Activated CD8-positive, alpha-beta T cell treated with anti-CD3 and anti-CD28 coated beads for 36 hours (primary cell): ENCODE measurements at regions of chr4 and their contacts with region 1.

Region 1: GRCh38 chr4:37452952-37453280 is 208.4 kb downstream of the NWD2 start:
- DNase-seq: peak; percentile 76
- ATAC-seq: peak; percentile 69
- H3K4me3 Mint-ChIP-seq: peak overlapping the region; percentile 59
- H3K27ac Mint-ChIP-seq: no peak overlapping the region
- H3K4me1 Mint-ChIP-seq: peaks cover 15% of the 10 kb centered on the region
- H3K27me3 Mint-ChIP-seq: peaks cover 42% of the 10 kb centered on the region
- CTCF ChIP-seq: peak; percentile 57

Region 2: DNA sequence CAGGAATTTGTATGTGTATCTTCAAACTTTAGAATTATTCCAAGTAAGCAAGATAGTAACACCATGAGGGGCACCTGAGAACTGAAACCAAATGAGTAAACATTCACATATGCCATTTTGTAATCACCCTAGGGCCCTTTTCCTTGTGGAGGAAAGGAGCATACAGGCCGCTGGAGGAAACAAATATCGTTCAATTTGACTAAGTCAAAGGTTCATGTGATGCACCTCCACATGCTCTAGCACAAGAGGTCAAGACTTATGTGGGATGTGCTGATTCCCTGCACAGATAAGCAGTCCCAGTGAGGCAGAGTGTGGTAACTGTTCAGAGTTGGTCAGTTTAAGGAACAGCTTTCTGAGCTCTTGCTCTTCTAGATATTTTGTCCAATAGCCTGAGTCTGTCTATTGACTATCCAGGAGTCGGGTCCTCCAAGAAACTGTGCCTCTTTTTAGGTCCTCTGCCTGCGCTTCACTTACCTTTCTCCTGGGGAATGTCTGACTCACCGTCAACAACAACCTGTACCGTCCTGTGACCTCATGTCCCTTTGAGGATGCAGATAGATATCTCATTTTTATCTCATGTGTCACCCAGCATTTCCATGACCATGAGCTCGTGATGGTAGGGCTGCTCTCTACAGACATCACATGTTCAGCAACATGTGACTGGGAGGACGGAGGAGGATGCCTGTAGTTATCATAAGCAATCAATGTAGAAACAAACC is 11.5 kb before region 1 on chr4:
- CTCF ChIA-PET with region 1: interaction called, 47 read pairs
- POLR2A ChIA-PET with region 1: no interaction called
- intact Hi-C with region 1: no loop called
- DNase-seq: no peak
- ATAC-seq: no peak
- H3K4me3 Mint-ChIP-seq: no peak overlapping the region
- H3K27ac Mint-ChIP-seq: no peak overlapping the region
- H3K4me1 Mint-ChIP-seq: no peaks in the 10 kb centered on the region
- H3K27me3 Mint-ChIP-seq: peaks cover 19% of the 10 kb centered on the region
- CTCF ChIP-seq: no peak

Region 3: GRCh38 chr4:37561803-37562207 is 108.9 kb after region 1 on chr4:
- CTCF ChIA-PET with region 1: interaction called, 44 read pairs
- POLR2A ChIA-PET with region 1: interaction called, 4 read pairs
- intact Hi-C with region 1: loop called (anchors 1 kb)
- DNase-seq: no peak
- ATAC-seq: no peak
- H3K4me3 Mint-ChIP-seq: no peak overlapping the region
- H3K27ac Mint-ChIP-seq: no peak overlapping the region
- H3K4me1 Mint-ChIP-seq: no peaks in the 10 kb centered on the region
- H3K27me3 Mint-ChIP-seq: no peaks in the 10 kb centered on the region
- CTCF ChIP-seq: no peak

Region 4: GRCh38 chr4:37567841-37568240 is 114.9 kb after region 1 on chr4:
- CTCF ChIA-PET with region 1: interaction called, 44 read pairs
- POLR2A ChIA-PET with region 1: interaction called, 4 read pairs
- intact Hi-C with region 1: loop called (anchors 1 kb)
- DNase-seq: no peak
- ATAC-seq: no peak
- H3K4me3 Mint-ChIP-seq: no peak overlapping the region
- H3K27ac Mint-ChIP-seq: no peak overlapping the region
- H3K4me1 Mint-ChIP-seq: no peaks in the 10 kb centered on the region
- H3K27me3 Mint-ChIP-seq: no peaks in the 10 kb centered on the region
- CTCF ChIP-seq: no peak

Region 5: GRCh38 chr4:37793562-37793961 is 340.6 kb after region 1 on chr4:
- CTCF ChIA-PET with region 1: interaction called, 4 read pairs
- POLR2A ChIA-PET with region 1: no interaction called
- intact Hi-C with region 1: loop called (anchors 10 kb)
- DNase-seq: peak; percentile 25
- ATAC-seq: peak; percentile 62
- H3K4me3 Mint-ChIP-seq: no peak overlapping the region
- H3K27ac Mint-ChIP-seq: no peak overlapping the region
- H3K4me1 Mint-ChIP-seq: no peaks in the 10 kb centered on the region
- H3K27me3 Mint-ChIP-seq: no peaks in the 10 kb centered on the region
- CTCF ChIP-seq: no peak